Common myeloid progenitor, CD34-positive (primary cell): ENCODE measurements at regions of chr11 and their contacts with region 1.

Region 1: DNA sequence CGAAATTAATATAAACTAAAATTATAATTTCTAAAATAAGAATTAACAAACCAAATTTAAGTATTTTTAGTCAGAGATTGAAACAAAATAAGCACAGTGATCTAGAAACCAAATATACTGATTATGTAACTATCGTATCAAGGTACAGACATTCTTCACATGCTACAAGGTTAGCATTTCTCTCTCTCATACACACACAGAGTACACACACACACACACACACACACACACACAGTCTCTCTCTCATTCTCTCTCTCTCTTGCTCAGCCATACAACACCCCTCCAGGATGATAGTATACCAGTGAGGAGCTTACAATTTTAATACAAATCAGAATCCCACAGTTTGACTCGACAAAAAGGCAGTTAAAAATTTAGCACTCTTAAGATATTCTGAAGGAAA is 66.0 kb downstream of the RDX start:
- DNase-seq: no peak
- H3K4me3 ChIP-seq: no peak overlapping the region
- H3K27ac ChIP-seq: no peak overlapping the region
- H3K4me1 ChIP-seq: no peaks in the 10 kb centered on the region
- H3K27me3 ChIP-seq: no peaks in the 10 kb centered on the region

Region 2: GRCh38 chr11:110195845-110196754 is 34.3 kb before region 1 on chr11:
- CTCF ChIA-PET with region 1: no interaction called
- POLR2A ChIA-PET with region 1: no interaction called
- DNase-seq: no peak
- H3K4me3 ChIP-seq: no peak overlapping the region
- H3K27ac ChIP-seq: no peak overlapping the region
- H3K4me1 ChIP-seq: peaks cover 0 to 4% (median 0%) of the 10 kb centered on the region in 4 experiments
- H3K27me3 ChIP-seq: no peaks in the 10 kb centered on the region

Region 3: DNA sequence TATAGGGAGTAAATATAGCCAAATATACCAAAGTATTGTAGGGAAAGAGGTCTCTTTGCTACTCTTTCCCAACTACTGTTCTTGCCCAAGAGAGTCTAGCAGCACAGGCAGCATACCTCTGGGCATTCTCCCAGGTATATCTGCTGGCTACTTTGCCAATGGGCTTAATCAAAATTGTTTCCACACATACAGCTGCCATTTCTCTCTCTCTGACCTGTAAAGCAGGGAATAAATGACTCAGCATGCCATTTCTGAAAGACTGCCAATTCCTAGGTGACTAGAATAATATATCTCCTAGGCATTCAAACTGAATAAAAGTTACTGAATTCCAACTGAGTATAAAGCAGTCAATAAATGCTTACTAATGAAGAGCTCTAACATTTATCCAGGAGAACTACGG is 21.5 kb after region 1 on chr11:
- CTCF ChIA-PET with region 1: interaction called, 24 read pairs
- POLR2A ChIA-PET with region 1: no interaction called
- DNase-seq: peak in 2 of 3 donors; percentile 17 to 25
- H3K4me3 ChIP-seq: no peak overlapping the region
- H3K27ac ChIP-seq: no peak overlapping the region
- H3K4me1 ChIP-seq: peaks cover 0 to 20% (median 3%) of the 10 kb centered on the region in 4 experiments
- H3K27me3 ChIP-seq: no peaks in the 10 kb centered on the region

Region 4: GRCh38 chr11:110272919-110273318 is 42.5 kb after region 1 on chr11:
- CTCF ChIA-PET with region 1: no interaction called
- POLR2A ChIA-PET with region 1: no interaction called
- DNase-seq: no peak
- H3K4me3 ChIP-seq: no peak overlapping the region
- H3K27ac ChIP-seq: no peak overlapping the region
- H3K4me1 ChIP-seq: no peaks in the 10 kb centered on the region
- H3K27me3 ChIP-seq: no peaks in the 10 kb centered on the region